ENCODE measurements at regions of chr1 and their contacts with region 1.

Region 1: GRCh38 chr1:41658431-41659158 is 174.1 kb upstream of the EDN2 start:
- DNase-seq: no peak
- ATAC-seq: no peak
- H3K4me3 ChIP-seq: no peak overlapping the region
- H3K27ac ChIP-seq: no peak overlapping the region
- H3K4me1 ChIP-seq: peaks cover 10% of the 10 kb centered on the region
- H3K27me3 ChIP-seq: no peaks in the 10 kb centered on the region
- CTCF ChIP-seq: no peak

Region 2: DNA sequence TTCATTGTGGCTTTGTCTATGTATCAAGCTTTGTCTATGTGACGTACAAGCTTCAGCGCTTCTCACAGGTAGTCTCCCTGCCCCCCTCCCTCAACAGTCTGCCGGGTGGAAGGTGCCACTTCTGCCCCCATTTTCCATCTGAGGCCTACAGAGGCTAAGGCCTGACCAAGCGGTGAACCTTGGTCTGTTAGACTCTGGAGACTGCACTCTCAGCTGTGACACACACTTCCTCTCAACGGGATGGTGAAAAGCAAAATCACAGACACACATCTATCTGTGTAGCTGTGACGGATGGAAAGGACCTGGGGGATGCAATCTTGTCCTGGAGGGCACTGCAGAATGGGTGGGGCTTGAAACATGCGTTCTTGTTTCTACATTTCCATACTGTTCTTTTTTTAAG is 21.2 kb before region 1 on chr1:
- intact Hi-C with region 1: loop called in 1 of 2 experiments (anchors 2 kb)
- DNase-seq: no peak
- ATAC-seq: no peak
- H3K4me3 ChIP-seq: no peak overlapping the region
- H3K27ac ChIP-seq: no peak overlapping the region
- H3K4me1 ChIP-seq: no peaks in the 10 kb centered on the region
- H3K27me3 ChIP-seq: no peaks in the 10 kb centered on the region
- CTCF ChIP-seq: no peak